ENCODE measurements at regions of chr15 and their contacts with region 1.

Region 1: DNA sequence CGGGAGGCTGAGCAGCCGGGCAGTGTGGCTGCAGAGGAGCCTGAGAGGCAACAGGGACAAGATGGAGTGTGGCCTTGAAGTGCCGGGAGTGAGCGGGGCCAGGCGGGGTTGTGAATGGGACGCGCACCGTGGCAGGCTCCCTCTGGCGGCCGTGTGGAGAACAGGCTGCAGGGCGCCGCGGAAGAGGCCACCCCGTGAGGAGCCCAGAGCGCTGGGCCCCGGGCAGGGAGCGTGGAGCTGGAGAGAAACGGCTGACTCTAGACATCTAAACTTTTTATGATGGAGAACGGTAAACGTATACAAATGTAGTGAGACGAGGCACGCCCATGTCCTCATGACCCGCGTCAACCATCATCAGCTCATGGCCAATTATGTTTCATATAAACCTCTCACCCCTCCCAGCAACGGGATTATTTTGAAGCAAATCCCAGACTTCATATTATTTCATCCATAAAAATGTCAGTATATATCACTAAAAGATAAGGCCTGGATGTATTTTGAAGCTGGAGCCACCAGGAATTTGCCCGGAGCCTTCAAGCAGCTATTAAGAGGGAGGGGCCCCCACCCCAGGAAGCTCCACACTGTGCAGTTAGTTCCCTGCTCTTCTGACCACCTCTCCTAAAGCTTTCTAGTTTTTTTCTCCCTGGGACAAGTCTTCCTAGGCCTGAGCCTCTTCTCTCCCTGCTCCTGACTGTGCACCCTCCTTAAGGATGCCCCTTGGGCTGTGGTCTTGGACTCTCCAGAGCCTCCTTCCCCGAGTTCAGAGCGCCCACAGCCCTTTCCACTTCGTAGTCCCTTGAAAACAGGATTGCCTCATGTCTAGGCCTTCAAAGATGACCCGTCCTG is 149.4 kb downstream of the SMAD6 start:
- DNase-seq: peak; percentile 92
- H3K4me3 Mint-ChIP-seq: no peak overlapping the region
- H3K27ac Mint-ChIP-seq: no peak overlapping the region
- H3K4me1 Mint-ChIP-seq: peaks cover 17% of the 10 kb centered on the region
- H3K27me3 Mint-ChIP-seq: peaks cover 8% of the 10 kb centered on the region
- CTCF ChIP-seq: peak; percentile 89

Region 2: DNA sequence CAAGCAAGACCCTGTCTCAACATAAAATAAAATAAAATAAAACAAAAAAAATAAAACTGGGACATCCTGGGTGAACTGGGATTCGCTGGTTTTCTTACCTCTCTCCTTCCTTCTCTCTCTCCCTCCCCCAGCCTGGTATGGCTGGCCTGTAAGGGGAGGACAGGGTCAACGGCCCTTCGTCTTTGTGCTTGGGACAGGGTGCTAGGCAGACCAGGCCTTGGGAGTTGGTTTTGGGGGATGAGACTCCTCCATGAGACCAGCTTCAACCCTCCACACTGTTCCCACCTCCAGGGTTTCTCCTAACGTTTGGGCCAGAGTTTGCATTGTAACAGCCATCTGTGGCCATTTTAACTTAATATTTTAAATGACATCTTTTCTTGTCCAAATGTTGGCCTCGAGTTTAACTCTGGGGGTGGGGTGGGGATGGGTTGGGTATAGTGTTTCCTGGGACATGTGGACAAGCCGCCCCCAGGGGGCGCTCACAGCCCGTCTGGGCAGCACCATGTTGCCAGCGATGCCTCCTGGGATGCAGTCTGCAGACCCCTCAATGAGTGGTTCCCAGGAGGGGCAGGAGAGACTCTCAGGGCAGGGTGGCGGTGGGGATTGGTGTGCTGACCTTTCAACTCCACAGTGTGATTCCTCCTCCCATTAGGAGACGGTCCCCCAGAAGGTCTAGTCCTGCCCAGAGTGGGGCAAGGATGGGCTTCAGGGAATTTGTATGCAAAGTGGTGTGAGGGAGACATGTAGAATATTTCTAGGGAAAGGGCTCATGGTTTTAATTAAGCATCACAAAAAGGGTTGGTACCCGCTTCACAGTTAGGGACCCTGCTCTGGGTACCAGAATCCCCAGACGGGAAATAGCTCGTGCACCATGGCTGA is 247.9 kb before region 1 on chr15:
- CTCF ChIA-PET with region 1: interaction called, 9 read pairs
- intact Hi-C with region 1: loop called (anchors 1 kb)
- DNase-seq: peak; percentile 82
- H3K4me3 Mint-ChIP-seq: no peak overlapping the region
- H3K27ac Mint-ChIP-seq: no peak overlapping the region
- H3K4me1 Mint-ChIP-seq: no peaks in the 10 kb centered on the region
- H3K27me3 Mint-ChIP-seq: peaks cover 34% of the 10 kb centered on the region
- CTCF ChIP-seq: peak; percentile 90

Region 3: GRCh38 chr15:66707310-66708082 is 144.0 kb before region 1 on chr15:
- CTCF ChIA-PET with region 1: interaction called, 9 read pairs
- intact Hi-C with region 1: loop called (anchors 5 kb)
- DNase-seq: peak; percentile 60
- H3K4me3 Mint-ChIP-seq: peak overlapping the region; percentile 98
- H3K27ac Mint-ChIP-seq: no peak overlapping the region
- H3K4me1 Mint-ChIP-seq: peaks cover 21% of the 10 kb centered on the region
- H3K27me3 Mint-ChIP-seq: no peaks in the 10 kb centered on the region
- CTCF ChIP-seq: no peak

Region 4: DNA sequence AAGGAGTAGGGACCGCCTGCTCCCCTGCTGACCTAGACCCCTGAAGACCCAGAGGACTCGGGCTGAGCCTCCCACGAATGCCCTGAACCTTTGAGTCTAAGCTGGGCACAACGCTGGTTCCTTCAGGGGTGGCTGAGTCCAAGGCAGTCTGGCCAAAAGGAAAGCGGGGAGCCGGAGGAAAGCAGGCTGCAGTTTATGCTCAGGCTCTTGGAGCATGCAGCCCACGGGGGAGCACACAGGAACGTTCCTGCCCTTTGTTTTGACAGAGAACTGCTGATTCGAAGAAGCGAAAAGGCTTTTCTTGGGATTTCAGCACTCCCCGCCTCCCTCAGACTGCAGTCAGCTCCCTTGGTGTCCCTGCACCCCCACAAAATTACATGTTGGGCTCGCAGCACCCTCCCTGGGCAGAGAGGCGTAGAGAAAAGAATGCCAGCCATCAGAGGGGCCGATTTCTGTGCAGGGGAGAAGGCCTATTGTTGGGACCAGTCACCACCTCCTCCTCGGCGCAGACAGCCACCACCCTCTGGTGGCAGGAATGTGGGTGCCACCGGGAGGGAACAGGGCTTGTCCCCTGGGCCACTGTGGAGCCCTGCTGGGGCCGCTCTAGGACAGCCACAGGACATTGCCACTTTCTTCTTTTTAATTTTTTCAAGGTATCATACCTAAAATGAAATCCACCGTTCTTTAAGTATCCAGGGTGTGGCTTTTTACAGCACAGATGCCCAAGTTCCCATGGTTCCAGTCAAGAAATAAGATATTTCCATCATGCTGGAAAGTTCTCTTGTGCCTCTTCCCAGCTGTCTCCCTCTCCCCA is 77.2 kb before region 1 on chr15:
- CTCF ChIA-PET with region 1: interaction called, 23 read pairs
- intact Hi-C with region 1: loop called (anchors 5 kb)
- DNase-seq: peak; percentile 97
- H3K4me3 Mint-ChIP-seq: no peak overlapping the region
- H3K27ac Mint-ChIP-seq: peak overlapping the region; percentile 76
- H3K4me1 Mint-ChIP-seq: peaks cover 87% of the 10 kb centered on the region
- H3K27me3 Mint-ChIP-seq: no peaks in the 10 kb centered on the region
- CTCF ChIP-seq: peak; percentile 98

Region 5: DNA sequence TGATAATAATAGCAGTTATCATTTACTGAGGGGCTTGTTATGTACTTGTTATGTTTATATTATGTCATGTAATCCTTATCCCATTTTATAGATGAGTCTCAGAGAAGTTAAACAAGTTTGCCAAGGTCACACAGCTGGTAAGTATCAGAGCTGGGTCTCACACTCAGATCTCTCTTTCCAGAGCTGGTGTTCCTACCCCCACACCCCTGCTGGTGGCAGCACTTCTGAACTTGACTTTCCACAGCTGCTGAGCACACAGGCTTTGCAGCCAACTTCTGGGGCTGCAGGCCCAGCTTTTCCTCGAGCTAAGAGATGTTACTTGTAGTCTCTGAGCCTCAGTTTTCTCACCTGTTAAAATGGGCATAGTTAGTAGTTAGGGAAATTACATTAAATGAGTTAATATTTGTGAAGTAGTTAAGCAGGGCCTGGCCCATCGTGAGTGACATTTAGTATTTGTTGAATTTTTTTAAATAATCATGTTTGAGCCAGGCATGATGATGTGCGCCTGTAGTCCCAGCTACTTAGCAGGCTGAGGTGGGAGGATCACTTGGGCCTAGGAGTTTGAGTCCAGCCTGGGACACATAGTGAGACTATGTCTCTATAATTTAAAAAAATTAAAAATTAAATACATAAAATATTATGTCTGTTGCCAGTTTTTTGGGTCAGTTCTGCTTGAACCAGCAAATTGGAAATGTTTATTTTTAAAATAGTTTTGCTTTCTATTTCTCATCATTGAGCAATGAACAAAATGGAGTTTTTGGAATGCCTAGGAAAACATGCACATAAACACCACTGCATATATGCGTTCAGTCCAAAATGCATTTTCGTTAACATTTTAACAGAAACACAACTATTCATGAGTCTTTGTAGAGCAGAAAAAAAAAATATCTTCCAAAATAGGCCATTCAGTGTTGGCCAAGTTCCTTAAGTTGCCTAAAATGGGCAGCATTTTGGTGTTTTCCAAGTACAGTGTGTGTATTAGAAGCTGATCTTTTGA is 62.1 kb before region 1 on chr15:
- CTCF ChIA-PET with region 1: interaction called, 38 read pairs
- intact Hi-C with region 1: loop called (anchors 1 kb)
- DNase-seq: peak; percentile 61
- H3K4me3 Mint-ChIP-seq: no peak overlapping the region
- H3K27ac Mint-ChIP-seq: no peak overlapping the region
- H3K4me1 Mint-ChIP-seq: no peaks in the 10 kb centered on the region
- H3K27me3 Mint-ChIP-seq: no peaks in the 10 kb centered on the region
- CTCF ChIP-seq: peak; percentile 64

Region 6: GRCh38 chr15:66819084-66819483 is 32.4 kb before region 1 on chr15:
- CTCF ChIA-PET with region 1: no interaction called
- intact Hi-C with region 1: no loop called
- DNase-seq: peak; percentile 26
- H3K4me3 Mint-ChIP-seq: no peak overlapping the region
- H3K27ac Mint-ChIP-seq: no peak overlapping the region
- H3K4me1 Mint-ChIP-seq: peaks cover 26% of the 10 kb centered on the region
- H3K27me3 Mint-ChIP-seq: no peaks in the 10 kb centered on the region
- CTCF ChIP-seq: no peak

Measured in Calu3 (cell line).